Panc1 (cell line): ENCODE measurements at regions of chr22 and their contacts with region 1.

Region 1: GRCh38 chr22:27534720-27535125 is 266.8 kb downstream of the MN1 start:
- DNase-seq: no peak
- ATAC-seq: no peak
- H3K4me3 ChIP-seq: no peak overlapping the region
- H3K27ac ChIP-seq: no peak overlapping the region
- H3K4me1 ChIP-seq: no peaks in the 10 kb centered on the region
- H3K27me3 ChIP-seq: no peaks in the 10 kb centered on the region
- CTCF ChIP-seq: no peak

Region 2: GRCh38 chr22:26751217-26751616 is 783.5 kb before region 1 on chr22:
- CTCF ChIA-PET with region 1: interaction called, 19 read pairs
- POLR2A ChIA-PET with region 1: no interaction called
- in situ Hi-C with region 1: no loop called
- intact Hi-C with region 1: no loop called
- DNase-seq: no peak
- ATAC-seq: no peak
- H3K4me3 ChIP-seq: no peak overlapping the region
- H3K27ac ChIP-seq: no peak overlapping the region
- H3K4me1 ChIP-seq: no peaks in the 10 kb centered on the region
- H3K27me3 ChIP-seq: no peaks in the 10 kb centered on the region
- CTCF ChIP-seq: no peak

Region 3: DNA sequence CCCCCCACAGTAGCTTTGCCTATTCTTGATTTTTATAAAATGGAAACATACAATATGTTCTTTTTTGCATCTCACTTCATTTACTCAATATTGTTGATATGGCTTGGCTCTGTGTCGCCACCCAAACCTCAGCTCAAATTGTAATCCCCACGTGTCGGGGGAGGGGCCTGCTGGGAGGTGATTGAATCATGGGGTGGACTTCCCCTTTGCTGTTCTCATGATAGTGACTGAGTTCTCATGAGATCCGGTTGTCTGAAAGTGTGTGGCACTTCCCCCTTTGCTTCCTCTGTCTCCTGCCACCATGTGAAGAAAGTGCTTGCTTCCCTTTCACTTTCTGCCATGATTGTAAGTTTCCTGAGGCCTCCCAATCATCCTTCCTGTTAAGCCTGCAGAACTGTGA is 164.5 kb before region 1 on chr22:
- CTCF ChIA-PET with region 1: no interaction called
- POLR2A ChIA-PET with region 1: no interaction called
- in situ Hi-C with region 1: no loop called
- intact Hi-C with region 1: no loop called
- DNase-seq: no peak
- ATAC-seq: no peak
- H3K4me3 ChIP-seq: no peak overlapping the region
- H3K27ac ChIP-seq: no peak overlapping the region
- H3K4me1 ChIP-seq: no peaks in the 10 kb centered on the region
- H3K27me3 ChIP-seq: peaks cover 3% of the 10 kb centered on the region; the same call in 1 of the 2 replicates
- CTCF ChIP-seq: no peak

Region 4: DNA sequence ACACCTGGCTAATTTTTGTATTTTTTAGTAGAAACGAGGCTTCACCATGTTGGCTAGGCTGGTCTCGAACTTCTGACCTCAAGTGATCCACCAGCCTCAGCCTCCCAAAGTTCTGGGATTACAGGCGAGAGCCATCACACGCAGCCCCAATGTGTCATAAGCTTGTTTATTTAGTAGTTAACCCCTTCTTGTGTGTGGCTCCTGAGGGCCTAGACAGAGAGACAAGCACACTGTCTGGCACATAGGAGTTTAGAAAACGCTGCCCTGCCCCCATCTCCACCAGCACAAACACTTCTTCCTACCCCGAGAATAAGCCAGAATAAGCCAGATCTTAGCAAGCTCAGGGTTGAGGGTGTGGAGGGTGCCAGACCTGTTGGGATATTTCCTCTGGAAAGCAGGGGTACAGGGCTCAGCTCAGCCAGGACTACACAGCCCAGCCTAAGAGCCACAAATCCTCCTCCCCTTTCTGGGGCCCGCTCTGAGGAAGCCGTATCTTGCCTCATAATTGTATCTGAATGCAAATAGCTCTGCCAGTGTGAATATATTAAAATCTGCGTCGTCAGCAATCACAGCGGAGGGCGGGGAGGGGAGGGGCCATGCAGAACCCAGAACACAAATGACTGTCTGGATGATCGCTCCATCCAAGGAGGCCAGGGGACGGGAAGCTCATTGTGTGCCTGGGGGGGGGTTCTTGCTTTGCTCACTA is 19.5 kb after region 1 on chr22:
- CTCF ChIA-PET with region 1: no interaction called
- POLR2A ChIA-PET with region 1: no interaction called
- in situ Hi-C with region 1: no loop called
- intact Hi-C with region 1: no loop called
- DNase-seq: no peak
- ATAC-seq: no peak
- H3K4me3 ChIP-seq: no peak overlapping the region
- H3K27ac ChIP-seq: no peak overlapping the region
- H3K4me1 ChIP-seq: no peaks in the 10 kb centered on the region
- H3K27me3 ChIP-seq: no peaks in the 10 kb centered on the region
- CTCF ChIP-seq: no peak